MCF 10A (cell line): ENCODE measurements at regions of chr1 and their contacts with region 1.

Region 1: DNA sequence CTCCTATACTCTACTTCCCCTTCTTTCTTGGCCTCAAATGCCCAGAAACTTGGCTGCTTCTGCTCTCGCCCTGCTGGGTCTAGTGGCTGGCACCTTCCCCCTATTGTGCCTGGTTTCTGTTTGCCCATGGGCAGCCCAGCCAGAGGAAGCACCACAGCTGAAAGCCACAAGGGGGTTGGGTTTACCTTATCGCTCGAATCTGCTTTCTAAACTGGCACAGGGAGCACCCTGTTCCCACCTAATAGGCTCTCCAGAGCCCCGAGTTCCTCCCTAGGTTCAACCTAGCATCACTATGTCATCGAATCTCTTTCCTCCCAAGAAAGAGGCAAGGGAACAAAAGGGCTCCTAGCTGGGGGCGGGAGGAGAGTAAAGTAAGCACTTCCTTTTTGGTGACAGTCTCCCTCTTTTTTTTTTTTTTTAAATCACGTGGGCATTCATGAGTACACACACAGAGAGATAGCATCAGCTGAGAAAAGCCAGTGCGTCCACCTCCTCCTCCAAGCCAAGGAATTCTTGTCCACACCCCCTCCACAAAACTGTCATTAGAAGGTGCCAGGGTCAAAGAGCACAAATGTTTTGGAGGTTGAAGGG is 72.8 kb downstream of the PLEKHA6 start:
- DNase-seq: peak; percentile 67
- H3K4me3 Mint-ChIP-seq: peak overlapping the region; percentile 89
- H3K27ac Mint-ChIP-seq: peak overlapping the region; percentile 88
- H3K4me1 Mint-ChIP-seq: peaks cover 74% of the 10 kb centered on the region
- H3K27me3 Mint-ChIP-seq: no peaks in the 10 kb centered on the region
- CTCF ChIP-seq: peak; percentile 14

Region 2: GRCh38 chr1:204190212-204191211 is 96.4 kb before region 1 on chr1:
- CTCF ChIA-PET with region 1: no interaction called
- POLR2A ChIA-PET with region 1: no interaction called
- intact Hi-C with region 1: no loop called
- DNase-seq: no peak
- H3K4me3 Mint-ChIP-seq: no peak overlapping the region
- H3K27ac Mint-ChIP-seq: no peak overlapping the region
- H3K4me1 Mint-ChIP-seq: no peaks in the 10 kb centered on the region
- H3K27me3 Mint-ChIP-seq: peaks cover 66% of the 10 kb centered on the region
- CTCF ChIP-seq: no peak

Region 3: GRCh38 chr1:204213668-204214662 is 73.0 kb before region 1 on chr1 and contains the start of gene GOLT1A:
- CTCF ChIA-PET with region 1: interaction called, 6 read pairs
- POLR2A ChIA-PET with region 1: no interaction called
- intact Hi-C with region 1: loop called (anchors 1 kb)
- DNase-seq: peak; percentile 93
- H3K4me3 Mint-ChIP-seq: peak within 1 kb of the TSS; percentile 68
- H3K27ac Mint-ChIP-seq: peak within 1 kb of the TSS; percentile 8
- H3K4me1 Mint-ChIP-seq: peaks cover 6% of the 10 kb centered on the region
- H3K27me3 Mint-ChIP-seq: no peaks in the 10 kb centered on the region
- CTCF ChIP-seq: peak; percentile 93
- total RNA-seq, gene GOLT1A: 11.5 and 12.7 TPM in 2 replicates

Region 4: GRCh38 chr1:204307334-204307883 is 20.5 kb after region 1 on chr1:
- CTCF ChIA-PET with region 1: interaction called, 3 read pairs
- POLR2A ChIA-PET with region 1: interaction called, 413 read pairs
- intact Hi-C with region 1: no loop called
- DNase-seq: no peak
- H3K4me3 Mint-ChIP-seq: no peak overlapping the region
- H3K27ac Mint-ChIP-seq: no peak overlapping the region
- H3K4me1 Mint-ChIP-seq: peaks cover 20% of the 10 kb centered on the region
- H3K27me3 Mint-ChIP-seq: no peaks in the 10 kb centered on the region
- CTCF ChIP-seq: no peak

Region 5: DNA sequence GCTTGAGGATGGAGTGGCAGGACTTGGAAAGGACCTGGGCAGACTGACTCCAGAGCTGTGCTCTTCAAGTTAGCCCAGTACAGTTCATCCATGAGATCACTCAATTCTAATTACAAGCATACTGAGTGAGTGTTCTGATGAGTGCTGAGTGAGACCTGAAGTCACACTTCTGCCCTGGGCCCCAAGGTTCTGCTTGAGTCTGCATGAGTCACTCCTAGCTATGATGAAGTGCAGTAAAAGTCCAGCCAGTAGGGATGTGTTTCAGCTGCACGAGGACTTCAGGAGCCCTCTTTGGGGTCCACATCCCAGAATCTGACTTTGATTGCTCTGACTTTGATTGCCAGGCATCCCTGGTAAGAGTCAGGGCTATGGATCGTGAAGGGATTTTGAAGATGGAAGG is 37.0 kb after region 1 on chr1:
- CTCF ChIA-PET with region 1: interaction called, 28 read pairs
- POLR2A ChIA-PET with region 1: interaction called, 413 read pairs
- intact Hi-C with region 1: loop called (anchors 1 kb)
- DNase-seq: peak; percentile 81
- H3K4me3 Mint-ChIP-seq: no peak overlapping the region
- H3K27ac Mint-ChIP-seq: peak overlapping the region; percentile 2
- H3K4me1 Mint-ChIP-seq: peaks cover 54% of the 10 kb centered on the region
- H3K27me3 Mint-ChIP-seq: no peaks in the 10 kb centered on the region
- CTCF ChIP-seq: no peak

Region 6: GRCh38 chr1:204350857-204351573 is 64.1 kb after region 1 on chr1:
- CTCF ChIA-PET with region 1: interaction called, 5 read pairs
- POLR2A ChIA-PET with region 1: interaction called, 11 read pairs
- intact Hi-C with region 1: no loop called
- DNase-seq: no peak
- H3K4me3 Mint-ChIP-seq: no peak overlapping the region
- H3K27ac Mint-ChIP-seq: no peak overlapping the region
- H3K4me1 Mint-ChIP-seq: no peaks in the 10 kb centered on the region
- H3K27me3 Mint-ChIP-seq: no peaks in the 10 kb centered on the region
- CTCF ChIP-seq: no peak